Activated CD4-positive, alpha-beta memory T cell treated with anti-CD3 and anti-CD28 coated beads for 36 hours (primary cell): ENCODE measurements at regions of chr1 and their contacts with region 1.

Region 1: GRCh38 chr1:12434174-12434573 is 183.8 kb downstream of the DHRS3 start:
- DNase-seq: peak; percentile 85
- H3K4me3 Mint-ChIP-seq: peak overlapping the region; percentile 41
- H3K27ac Mint-ChIP-seq: peak overlapping the region; percentile 83
- H3K4me1 Mint-ChIP-seq: peaks cover 62% of the 10 kb centered on the region
- H3K27me3 Mint-ChIP-seq: no peaks in the 10 kb centered on the region

Region 2: DNA sequence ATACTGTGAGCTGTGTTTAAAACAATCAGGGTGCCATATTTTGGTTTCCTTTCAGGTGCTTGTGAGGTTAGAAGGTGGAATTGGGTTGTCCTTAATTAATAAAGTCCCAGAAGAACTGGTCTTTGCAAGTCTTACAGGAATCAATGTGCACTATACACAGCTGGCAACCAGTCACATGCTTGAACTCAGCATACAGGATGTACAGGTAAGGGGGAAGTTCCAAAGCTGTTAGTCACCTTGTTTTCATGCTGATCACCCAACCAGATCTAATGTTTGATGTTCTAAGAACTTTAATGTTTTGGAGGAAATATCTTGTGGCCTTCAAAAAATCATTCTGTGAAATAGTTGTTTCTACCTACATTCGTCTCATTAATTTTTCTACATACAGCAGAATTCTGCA is 48.0 kb before region 1 on chr1:
- CTCF ChIA-PET with region 1: no interaction called
- POLR2A ChIA-PET with region 1: interaction called, 3 read pairs
- intact Hi-C with region 1: loop called (anchors 1 kb)
- DNase-seq: peak; percentile 39
- H3K4me3 Mint-ChIP-seq: no peak overlapping the region
- H3K27ac Mint-ChIP-seq: peak overlapping the region; percentile 69
- H3K4me1 Mint-ChIP-seq: peaks cover 44% of the 10 kb centered on the region
- H3K27me3 Mint-ChIP-seq: no peaks in the 10 kb centered on the region

Region 3: GRCh38 chr1:12448746-12449177 is 14.6 kb after region 1 on chr1:
- CTCF ChIA-PET with region 1: interaction called, 40 read pairs
- POLR2A ChIA-PET with region 1: interaction called, 37 read pairs
- intact Hi-C with region 1: loop called (anchors 1 kb)
- DNase-seq: no peak
- H3K4me3 Mint-ChIP-seq: no peak overlapping the region
- H3K27ac Mint-ChIP-seq: peak overlapping the region; percentile 88
- H3K4me1 Mint-ChIP-seq: peaks cover 65% of the 10 kb centered on the region
- H3K27me3 Mint-ChIP-seq: peaks cover 11% of the 10 kb centered on the region

Region 4: DNA sequence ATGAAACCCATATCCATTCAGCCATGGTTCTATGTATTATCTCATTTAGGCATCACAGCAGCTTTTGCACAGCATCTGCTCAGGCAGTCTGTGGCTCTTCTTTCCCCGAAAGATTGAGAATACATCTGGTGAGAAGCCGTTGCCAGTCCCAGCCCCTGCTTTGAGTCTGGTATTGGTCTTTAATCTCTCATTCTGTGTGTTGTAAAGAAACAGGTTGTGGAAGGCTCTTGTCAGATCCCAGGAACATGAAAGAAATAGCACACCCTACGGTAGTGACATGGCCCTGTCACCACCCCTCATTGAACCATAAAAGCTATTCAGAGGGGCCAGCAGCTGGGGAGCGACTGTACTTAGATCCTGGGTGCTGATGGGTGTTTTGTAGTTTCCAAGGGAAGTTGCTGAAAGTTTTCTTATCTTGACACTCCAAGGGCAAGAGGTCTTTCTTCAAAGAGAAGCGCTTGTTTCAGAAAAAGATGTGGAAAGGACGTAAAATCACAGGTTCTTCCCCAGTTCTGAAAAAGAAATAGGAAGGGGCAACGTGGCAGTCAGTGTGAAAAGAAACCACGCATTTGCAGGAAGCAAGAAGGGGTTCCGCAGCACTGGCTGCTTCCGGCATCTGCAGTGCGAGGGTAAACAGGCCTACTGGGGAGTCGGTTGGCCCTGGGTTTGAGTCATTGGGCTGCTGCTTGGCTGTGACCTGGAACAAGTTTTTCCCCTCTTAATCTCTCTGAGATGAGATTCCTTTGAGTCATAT is 38.8 kb after region 1 on chr1:
- CTCF ChIA-PET with region 1: interaction called, 5 read pairs
- POLR2A ChIA-PET with region 1: interaction called, 7 read pairs
- intact Hi-C with region 1: loop called (anchors 1 kb)
- DNase-seq: peak; percentile 91
- H3K4me3 Mint-ChIP-seq: peak overlapping the region; percentile 62
- H3K27ac Mint-ChIP-seq: peak overlapping the region; percentile 95
- H3K4me1 Mint-ChIP-seq: peaks cover 87% of the 10 kb centered on the region
- H3K27me3 Mint-ChIP-seq: no peaks in the 10 kb centered on the region

Region 5: GRCh38 chr1:12511516-12512468 is 77.6 kb after region 1 on chr1:
- CTCF ChIA-PET with region 1: interaction called, 4 read pairs
- POLR2A ChIA-PET with region 1: interaction called, 16 read pairs
- intact Hi-C with region 1: loop called (anchors 1 kb)
- DNase-seq: no peak
- H3K4me3 Mint-ChIP-seq: peak overlapping the region; percentile 85
- H3K27ac Mint-ChIP-seq: peak overlapping the region; percentile 100
- H3K4me1 Mint-ChIP-seq: peaks cover 47% of the 10 kb centered on the region
- H3K27me3 Mint-ChIP-seq: no peaks in the 10 kb centered on the region

Region 6: DNA sequence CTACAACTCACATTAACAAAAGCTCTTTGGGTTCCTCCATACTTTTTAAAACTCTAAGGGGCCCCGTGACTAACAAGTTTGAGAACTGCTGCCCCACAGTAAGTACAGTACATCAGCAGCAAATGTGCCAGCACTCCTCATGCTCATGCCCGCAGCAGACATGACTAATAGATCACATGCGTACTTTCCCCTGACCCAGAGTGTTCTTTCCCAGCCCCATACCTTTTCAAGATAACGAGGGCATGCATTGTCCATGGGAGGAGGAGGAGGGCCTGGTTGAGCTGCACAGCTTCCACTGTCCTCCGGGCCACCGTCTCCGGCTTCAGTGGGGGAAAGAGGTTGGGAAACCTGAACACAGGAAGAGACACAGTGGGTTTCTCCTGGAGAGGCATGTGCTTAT is 138.3 kb after region 1 on chr1:
- CTCF ChIA-PET with region 1: no interaction called
- POLR2A ChIA-PET with region 1: no interaction called
- intact Hi-C with region 1: no loop called
- DNase-seq: no peak
- H3K4me3 Mint-ChIP-seq: no peak overlapping the region
- H3K27ac Mint-ChIP-seq: no peak overlapping the region
- H3K4me1 Mint-ChIP-seq: no peaks in the 10 kb centered on the region
- H3K27me3 Mint-ChIP-seq: no peaks in the 10 kb centered on the region

Region 7: GRCh38 chr1:12604114-12604874 is 170.1 kb after region 1 on chr1:
- CTCF ChIA-PET with region 1: interaction called, 3 read pairs
- POLR2A ChIA-PET with region 1: interaction called, 3 read pairs
- intact Hi-C with region 1: loop called (anchors 1 kb)
- DNase-seq: peak; percentile 86
- H3K4me3 Mint-ChIP-seq: peak overlapping the region; percentile 39
- H3K27ac Mint-ChIP-seq: peak overlapping the region; percentile 66
- H3K4me1 Mint-ChIP-seq: peaks cover 58% of the 10 kb centered on the region
- H3K27me3 Mint-ChIP-seq: no peaks in the 10 kb centered on the region